Calu3 (cell line): ENCODE measurements at regions of chr3 and their contacts with region 1.

Region 1: DNA sequence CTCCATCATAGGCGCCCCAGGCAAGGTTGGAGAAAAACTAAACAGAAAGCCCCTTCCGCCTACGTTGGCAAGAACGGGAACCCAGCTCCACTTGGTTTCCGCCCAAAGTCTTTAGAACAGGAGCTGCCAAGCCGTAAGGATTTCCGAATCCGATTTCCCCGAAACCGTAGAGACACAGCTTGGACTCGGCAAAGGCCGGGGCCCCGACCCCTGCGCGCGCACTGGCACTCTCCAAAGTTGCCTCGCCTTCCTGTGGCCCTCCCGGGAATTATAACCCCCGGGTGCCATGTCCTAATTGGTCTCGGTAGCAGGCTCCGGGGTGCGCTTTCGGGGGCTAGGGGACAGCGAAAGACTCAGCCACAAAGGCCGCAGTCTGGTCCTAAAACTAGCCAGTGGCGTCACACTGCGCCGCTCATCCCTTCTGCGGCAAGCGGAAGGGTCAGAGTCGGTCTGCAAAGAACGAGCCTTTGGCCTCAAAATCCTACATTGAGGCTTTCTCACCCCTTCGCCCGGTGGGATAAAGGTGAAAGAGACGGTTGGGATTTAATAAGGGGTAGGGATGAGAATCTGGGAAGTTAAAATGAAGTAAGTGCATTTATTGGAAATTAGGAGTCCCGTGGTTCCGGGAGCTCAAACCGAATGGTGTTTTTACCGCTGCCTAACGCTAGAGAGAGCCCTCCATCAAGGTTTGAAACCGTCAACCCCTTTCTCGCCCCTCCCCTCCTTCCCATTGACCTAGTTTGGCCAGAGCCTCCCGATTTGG is 6.8 kb downstream of the BCL6 start:
- DNase-seq: peak; percentile 94
- H3K4me3 Mint-ChIP-seq: peak overlapping the region; percentile 83
- H3K27ac Mint-ChIP-seq: peak overlapping the region; percentile 59
- H3K4me1 Mint-ChIP-seq: peaks cover 42% of the 10 kb centered on the region
- H3K27me3 Mint-ChIP-seq: peaks cover 9% of the 10 kb centered on the region
- CTCF ChIP-seq: peak; percentile 96

Region 2: DNA sequence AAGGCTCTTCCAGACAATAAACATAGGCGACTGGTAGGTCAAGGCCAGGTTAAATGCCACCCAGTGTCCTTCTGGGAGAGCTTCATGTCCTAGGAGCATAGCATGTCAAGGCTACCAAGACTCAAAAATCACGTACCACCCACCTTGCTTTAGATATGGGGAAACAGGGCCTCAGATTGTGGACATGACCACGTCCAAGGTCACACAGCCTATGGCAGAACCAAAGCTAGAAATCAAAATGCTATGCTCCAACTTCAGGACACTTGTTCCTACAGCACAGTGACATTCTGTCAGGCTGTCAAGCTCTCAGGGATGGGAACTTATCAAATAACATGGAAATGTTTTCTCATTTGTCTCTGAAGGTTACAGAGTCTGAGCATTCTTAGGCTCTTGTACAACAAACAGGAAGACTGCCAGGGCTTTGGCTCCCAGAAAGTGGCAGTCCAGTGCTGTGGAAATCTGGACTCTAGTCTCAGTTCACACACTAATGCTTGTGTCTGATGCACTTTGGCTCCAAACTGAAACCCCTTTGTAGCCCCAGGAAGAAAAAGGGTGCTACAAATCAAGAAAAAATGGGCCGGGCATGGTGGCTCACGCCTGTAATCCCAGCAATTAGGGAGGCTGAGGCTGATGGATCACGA is 245.1 kb after region 1 on chr3:
- CTCF ChIA-PET with region 1: interaction called, 14 read pairs
- intact Hi-C with region 1: no loop called
- DNase-seq: no peak
- H3K4me3 Mint-ChIP-seq: no peak overlapping the region
- H3K27ac Mint-ChIP-seq: no peak overlapping the region
- H3K4me1 Mint-ChIP-seq: peaks cover 29% of the 10 kb centered on the region
- H3K27me3 Mint-ChIP-seq: no peaks in the 10 kb centered on the region
- CTCF ChIP-seq: no peak

Region 3: DNA sequence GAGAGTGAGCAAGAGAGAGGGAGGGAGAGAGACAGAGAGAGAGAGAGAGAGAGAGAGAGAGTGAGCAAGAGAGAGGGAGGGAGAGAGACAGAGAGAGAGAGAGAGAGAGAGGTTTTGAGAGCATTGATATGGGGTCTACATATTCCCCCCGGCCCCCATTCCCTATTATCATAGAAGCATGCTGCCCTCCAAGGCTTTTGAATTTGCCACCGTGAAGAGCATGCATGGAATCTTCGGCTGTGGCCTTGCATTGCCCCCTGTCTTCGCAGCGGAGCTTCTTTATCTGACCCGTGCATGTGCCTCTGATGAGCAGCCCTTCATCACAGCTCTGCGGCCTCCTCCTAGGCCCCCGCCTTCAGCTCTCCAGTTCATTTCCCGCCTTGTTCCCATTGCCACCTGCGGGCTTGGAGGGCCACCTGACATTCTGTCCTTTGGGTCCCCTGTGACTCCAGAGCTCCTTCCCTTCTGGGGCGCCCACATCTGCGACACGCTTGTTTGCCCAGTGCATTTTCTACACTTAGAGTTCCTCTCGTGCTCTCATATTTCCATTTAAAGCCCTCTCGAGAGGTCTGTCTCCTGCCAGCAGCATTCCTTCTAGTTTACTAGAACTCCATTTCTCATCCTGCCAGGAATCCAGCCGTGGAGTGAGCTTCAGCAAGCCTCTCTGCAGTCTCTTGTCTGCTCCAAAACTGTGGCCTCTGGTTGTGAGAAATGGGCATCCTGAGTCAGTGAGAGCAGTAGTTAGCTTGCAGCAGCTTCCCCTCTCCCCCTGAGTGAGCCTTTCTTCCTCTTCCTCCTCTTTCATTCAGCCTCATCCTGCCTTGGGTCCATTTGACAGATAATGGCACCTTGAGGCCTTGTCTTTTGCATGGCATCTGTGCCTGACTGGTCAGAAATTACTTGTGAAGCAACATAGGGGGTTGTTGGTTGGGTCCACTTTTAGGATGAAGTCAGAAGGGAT is 440.8 kb after region 1 on chr3:
- CTCF ChIA-PET with region 1: no interaction called
- intact Hi-C with region 1: no loop called
- DNase-seq: no peak
- H3K4me3 Mint-ChIP-seq: no peak overlapping the region
- H3K27ac Mint-ChIP-seq: no peak overlapping the region
- H3K4me1 Mint-ChIP-seq: peaks cover 68% of the 10 kb centered on the region
- H3K27me3 Mint-ChIP-seq: no peaks in the 10 kb centered on the region
- CTCF ChIP-seq: no peak

Region 4: DNA sequence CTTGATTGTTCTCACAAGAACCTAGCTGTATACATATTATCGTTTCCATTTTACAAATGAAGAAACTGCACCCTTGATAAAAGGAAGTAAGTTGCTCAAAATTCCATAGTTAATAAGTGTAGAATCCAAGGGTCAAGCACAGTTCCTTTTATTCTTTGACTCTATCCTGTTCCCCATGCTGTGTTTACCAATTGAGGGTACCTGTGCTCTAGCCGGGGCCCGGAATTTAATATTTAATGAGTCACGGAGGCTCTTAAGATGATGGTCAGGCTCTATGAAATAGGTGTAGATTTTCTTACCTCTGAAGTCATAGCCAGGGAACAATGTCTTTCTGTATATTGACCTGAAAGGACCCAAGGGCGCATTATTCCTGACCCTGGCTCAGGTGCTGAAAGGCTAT is 480.6 kb after region 1 on chr3:
- CTCF ChIA-PET with region 1: interaction called, 3 read pairs
- intact Hi-C with region 1: loop called (anchors 1 kb)
- DNase-seq: peak; percentile 80
- H3K4me3 Mint-ChIP-seq: no peak overlapping the region
- H3K27ac Mint-ChIP-seq: peak overlapping the region; percentile 62
- H3K4me1 Mint-ChIP-seq: peaks cover 88% of the 10 kb centered on the region
- H3K27me3 Mint-ChIP-seq: no peaks in the 10 kb centered on the region
- CTCF ChIP-seq: no peak

Region 5: DNA sequence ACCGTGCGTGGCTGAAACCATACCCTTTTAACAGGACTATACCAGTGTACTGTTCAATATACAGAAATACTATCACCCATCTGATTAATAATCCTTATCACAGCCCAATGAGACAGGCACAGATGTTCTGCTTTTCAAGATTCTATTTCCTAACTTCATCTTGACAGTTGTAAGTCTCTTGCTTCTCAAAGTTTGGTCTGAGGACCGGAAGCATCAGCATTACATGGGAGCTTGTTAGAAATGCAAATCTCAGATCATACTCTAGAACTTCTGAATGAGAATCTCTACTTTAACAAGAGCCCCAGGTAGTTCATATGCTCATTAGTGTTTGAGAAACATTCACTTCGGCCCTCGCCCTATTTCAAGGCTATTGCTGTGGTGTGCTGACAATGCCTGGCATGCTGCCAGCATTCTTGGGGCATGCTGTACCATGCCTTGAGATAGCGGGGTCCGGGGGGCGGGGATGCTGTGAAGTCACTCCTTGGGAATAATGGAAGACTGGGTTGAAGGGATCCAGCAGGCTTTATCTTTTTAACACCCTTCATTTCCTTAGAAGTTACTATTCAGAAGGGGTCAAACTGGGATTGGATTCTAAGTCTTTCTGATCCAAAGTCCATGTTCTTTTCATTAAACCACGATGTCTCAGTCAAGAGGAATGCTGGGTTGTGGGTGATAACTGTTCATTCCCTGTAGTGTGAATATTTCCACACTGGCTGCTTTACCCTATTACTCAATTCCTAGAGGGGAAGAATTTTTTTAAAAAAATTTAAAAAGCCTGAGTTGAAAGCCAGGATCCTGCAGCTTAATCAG is 610.1 kb after region 1 on chr3:
- CTCF ChIA-PET with region 1: interaction called, 6 read pairs
- intact Hi-C with region 1: loop called (anchors 2 kb)
- DNase-seq: peak; percentile 88
- H3K4me3 Mint-ChIP-seq: peak overlapping the region; percentile 18
- H3K27ac Mint-ChIP-seq: peak overlapping the region; percentile 69
- H3K4me1 Mint-ChIP-seq: peaks cover 65% of the 10 kb centered on the region
- H3K27me3 Mint-ChIP-seq: no peaks in the 10 kb centered on the region
- CTCF ChIP-seq: no peak

Region 6: DNA sequence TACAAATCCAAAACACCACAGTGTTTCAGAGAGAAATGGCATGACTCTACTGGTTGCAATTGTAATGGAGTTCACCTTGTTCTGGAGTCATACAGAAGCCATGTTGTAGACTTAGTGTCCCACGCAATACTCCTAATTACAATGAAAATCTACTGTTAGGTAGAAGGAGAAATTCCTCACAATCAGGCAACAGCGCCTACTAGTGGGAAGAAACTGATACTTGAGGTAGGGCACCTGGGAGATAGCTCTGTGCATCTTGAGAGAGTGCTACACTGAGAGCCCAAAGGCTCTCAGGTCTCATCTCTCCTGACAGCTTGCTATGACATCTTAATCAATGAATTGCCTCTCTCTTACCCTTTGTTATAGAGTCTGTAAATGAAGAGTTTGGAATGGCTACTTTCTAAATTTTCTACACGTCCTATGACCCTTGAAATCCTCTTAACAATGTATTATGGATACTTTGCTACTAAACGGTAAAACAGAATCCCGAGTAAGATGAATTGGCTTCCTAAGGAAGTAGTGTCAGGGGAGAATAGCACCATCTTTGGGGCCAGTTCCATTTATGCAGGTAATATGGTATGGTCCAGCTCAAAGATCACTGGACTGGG is 1010.6 kb after region 1 on chr3:
- CTCF ChIA-PET with region 1: interaction called, 8 read pairs
- intact Hi-C with region 1: loop called (anchors 5 kb)
- DNase-seq: peak; percentile 44
- H3K4me3 Mint-ChIP-seq: no peak overlapping the region
- H3K27ac Mint-ChIP-seq: no peak overlapping the region
- H3K4me1 Mint-ChIP-seq: peaks cover 16% of the 10 kb centered on the region
- H3K27me3 Mint-ChIP-seq: no peaks in the 10 kb centered on the region
- CTCF ChIP-seq: peak; percentile 61

Region 7: GRCh38 chr3:188947401-188948280 is 1209.1 kb after region 1 on chr3:
- CTCF ChIA-PET with region 1: interaction called, 171 read pairs
- intact Hi-C with region 1: no loop called
- DNase-seq: peak; percentile 94
- H3K4me3 Mint-ChIP-seq: peak overlapping the region; percentile 62
- H3K27ac Mint-ChIP-seq: peak overlapping the region; percentile 90
- H3K4me1 Mint-ChIP-seq: peaks cover 42% of the 10 kb centered on the region
- H3K27me3 Mint-ChIP-seq: no peaks in the 10 kb centered on the region
- CTCF ChIP-seq: peak; percentile 75

Region 8: DNA sequence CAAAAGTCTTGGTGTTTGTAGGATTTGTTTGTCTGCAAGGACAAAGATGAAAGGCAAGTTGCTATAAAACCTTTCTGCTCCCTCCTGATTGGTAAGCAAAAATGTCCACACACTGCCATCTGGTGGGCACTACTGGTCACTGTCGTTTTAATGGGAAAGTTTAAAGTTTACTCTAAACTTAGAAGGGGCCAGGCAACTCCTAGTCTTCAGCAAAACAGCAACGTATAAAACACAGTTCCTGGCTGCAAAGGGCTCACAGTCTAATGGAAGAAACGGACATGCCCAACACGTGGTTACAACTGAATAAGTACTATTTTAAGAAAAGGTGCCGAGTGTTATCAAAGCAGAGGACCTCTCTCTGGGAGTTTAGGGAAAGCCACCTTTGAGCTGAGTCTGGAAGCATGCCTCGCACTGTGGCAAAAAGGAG is 1409.6 kb after region 1 on chr3:
- CTCF ChIA-PET with region 1: interaction called, 5 read pairs
- intact Hi-C with region 1: loop called (anchors 2 kb)
- DNase-seq: peak; percentile 74
- H3K4me3 Mint-ChIP-seq: no peak overlapping the region
- H3K27ac Mint-ChIP-seq: no peak overlapping the region
- H3K4me1 Mint-ChIP-seq: peaks cover 27% of the 10 kb centered on the region
- H3K27me3 Mint-ChIP-seq: no peaks in the 10 kb centered on the region
- CTCF ChIP-seq: peak; percentile 81

Region 9: GRCh38 chr3:189277711-189278110 is 1539.2 kb after region 1 on chr3:
- CTCF ChIA-PET with region 1: no interaction called
- intact Hi-C with region 1: no loop called
- DNase-seq: no peak
- H3K4me3 Mint-ChIP-seq: no peak overlapping the region
- H3K27ac Mint-ChIP-seq: no peak overlapping the region
- H3K4me1 Mint-ChIP-seq: peaks cover 28% of the 10 kb centered on the region
- H3K27me3 Mint-ChIP-seq: no peaks in the 10 kb centered on the region
- CTCF ChIP-seq: no peak